ENCODE measurements at regions of chr18 and their contacts with region 1.

Region 1: DNA sequence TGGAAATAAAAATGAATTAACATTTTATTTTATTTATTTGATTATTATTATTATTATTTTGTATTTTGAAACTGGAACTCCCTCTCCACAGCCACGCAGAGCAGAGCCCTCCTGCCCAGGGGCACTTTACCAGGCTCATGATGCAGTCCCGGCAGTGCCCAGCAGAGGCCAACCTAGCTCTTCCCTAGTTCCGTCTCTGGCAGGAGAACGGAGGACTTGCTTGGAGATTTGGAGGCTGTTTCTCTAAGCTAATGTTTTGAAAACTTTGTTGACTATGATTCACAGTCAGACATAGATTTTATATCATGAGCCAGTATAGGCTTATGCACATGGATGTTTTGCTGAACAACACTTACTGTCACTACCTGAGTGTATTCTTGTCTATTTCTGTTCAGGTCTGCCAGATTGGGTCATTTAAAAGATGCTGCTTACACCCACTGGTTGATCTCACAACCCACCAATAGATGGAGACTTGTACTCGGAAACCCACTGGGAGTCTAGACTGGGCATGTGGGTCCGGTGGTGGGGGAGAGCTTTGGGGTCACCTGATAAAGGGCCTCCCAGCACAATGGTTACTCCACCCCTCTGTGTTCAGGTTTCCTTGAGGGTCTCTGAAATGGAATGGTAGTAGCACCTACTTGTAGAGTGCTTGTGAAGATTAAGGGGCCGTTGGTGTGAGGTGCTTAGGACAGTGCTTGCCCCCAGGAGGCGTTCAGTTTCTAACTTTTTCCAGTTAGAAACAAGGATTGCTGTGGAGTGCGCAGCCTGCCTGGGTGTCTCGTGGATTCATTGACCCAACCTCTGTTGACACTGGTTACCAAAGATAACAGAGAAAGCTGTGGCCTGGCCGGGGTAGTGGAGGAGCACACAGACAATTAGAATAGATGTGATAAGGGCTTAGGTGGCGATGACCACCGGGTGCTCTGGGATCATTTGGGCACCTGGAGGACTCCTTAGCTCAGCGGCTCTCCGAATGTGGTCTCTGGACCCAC is 177.3 kb downstream of the HAUS1 start:
- DNase-seq: peak; percentile 46 to 83 (median 72)
- ATAC-seq: peak; percentile 98
- H3K4me3 ChIP-seq: no peak overlapping the region
- H3K27ac ChIP-seq: no peak overlapping the region
- H3K4me1 ChIP-seq: no peaks in the 10 kb centered on the region
- H3K27me3 ChIP-seq: no peaks in the 10 kb centered on the region
- CTCF ChIP-seq: peak; percentile 89 to 95

Region 2: DNA sequence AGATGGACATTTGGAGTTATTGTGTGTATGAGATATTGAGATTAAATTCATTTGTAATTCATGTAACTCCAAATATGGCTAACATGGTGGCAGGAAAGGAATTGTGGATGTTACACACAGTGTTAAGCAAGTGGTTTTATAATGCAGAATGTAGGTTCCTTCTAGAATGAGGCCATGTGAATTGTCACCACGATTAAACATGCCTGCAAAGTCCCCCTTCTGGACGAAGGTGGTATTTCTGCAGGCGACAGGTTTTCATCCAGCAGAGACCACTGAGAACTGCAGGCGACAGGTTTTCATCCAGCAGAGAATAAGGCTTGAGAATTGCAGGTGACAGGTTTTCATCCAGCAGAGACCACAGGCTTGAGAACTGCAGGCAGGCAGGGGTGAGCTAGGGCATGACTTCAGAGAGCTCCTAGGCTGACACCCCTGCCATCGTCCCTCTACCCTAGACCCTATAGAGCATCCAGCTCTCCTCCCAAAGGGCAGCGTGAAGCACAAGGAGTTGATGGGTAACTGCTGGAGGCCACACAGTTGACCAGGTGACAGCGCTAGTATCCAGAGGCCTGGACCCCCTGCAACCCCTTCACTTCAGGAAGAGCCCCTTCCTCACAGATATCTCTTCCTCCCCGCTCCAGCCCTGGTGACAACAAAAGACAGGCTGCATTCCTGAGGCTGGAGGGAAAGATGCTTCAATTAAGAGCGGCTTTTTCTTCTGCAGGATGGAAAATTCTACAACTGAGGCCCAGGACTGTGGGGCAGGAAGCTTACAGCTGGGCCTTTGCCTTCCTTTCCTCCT is 199.8 kb after region 1 on chr18:
- intact Hi-C with region 1: loop called in 1 of 2 experiments (anchors 5 kb)
- DNase-seq: peak in 2 of 4 donors; percentile 37 to 68
- ATAC-seq: peak; percentile 78
- H3K4me3 ChIP-seq: no peak overlapping the region
- H3K27ac ChIP-seq: no peak overlapping the region
- H3K4me1 ChIP-seq: no peaks in the 10 kb centered on the region
- H3K27me3 ChIP-seq: no peaks in the 10 kb centered on the region
- CTCF ChIP-seq: peak; percentile 55 to 61

Region 3: DNA sequence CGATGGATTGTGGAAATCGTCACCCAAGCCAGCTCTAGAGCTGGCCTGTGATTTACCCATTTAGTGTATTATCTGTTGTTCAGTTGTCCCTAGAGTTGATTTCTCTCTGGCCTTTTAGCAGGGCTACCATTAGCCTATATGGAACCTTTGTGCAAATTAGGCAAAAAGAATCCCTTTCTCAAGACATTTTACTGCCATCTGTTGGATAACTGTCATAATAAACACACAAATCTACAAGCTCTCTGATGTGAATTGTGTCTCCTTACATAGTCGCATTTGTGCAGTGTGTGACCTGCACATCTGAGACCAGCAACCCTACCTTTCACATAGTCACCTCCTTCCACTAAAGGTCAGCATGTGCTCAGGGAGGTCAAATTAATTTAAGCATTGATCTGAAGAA is 341.5 kb after region 1 on chr18:
- intact Hi-C with region 1: loop called in 1 of 2 experiments (anchors 10 kb)
- DNase-seq: peak in 1 of 4 donors; percentile 10
- ATAC-seq: peak; percentile 34
- H3K4me3 ChIP-seq: no peak overlapping the region
- H3K27ac ChIP-seq: no peak overlapping the region
- H3K4me1 ChIP-seq: peaks cover 0 to 9% of the 10 kb centered on the region in 2 donors
- H3K27me3 ChIP-seq: peaks cover 0 to 4% of the 10 kb centered on the region in 2 donors
- CTCF ChIP-seq: no peak

Region 4: DNA sequence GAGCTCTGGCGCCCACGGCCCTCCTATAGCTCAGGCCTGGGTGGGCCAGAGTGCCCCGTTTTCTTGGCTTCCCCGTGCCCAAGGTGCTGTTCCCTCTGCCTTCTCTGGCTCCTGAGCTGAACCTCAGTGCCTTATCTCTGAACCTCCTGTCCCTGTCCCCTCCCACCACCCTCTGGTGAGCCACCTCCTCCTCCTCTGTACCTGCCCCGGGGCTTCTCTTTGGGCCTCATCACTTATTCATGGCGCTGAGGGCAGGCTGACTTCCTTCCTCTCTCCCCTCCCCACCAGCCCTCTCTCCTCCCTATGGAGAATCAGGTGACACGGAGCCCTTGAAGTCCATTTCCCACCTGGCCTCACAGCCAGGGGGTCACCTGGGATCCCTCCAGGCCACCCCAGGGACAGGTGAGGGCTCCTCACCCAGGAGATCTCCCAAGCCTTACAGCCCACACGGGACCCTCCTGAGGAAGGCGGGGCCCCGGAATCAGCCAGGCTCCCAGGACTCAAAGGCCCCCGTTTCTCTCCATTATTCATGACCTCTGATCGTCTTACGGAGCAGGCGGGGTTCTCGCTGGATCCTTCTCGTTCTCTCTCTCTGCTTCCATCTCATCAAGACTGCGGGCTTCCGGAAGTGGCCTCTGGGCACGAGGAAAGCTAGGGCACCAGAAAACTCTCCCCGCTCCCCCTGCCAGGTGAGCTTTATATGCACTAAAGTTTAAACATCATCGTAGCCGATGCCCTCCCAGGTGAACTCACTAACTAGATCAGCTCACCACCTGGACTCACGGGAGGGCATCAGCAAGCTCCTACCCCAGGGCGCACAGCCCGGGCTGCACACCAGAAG is 375.9 kb after region 1 on chr18 and contains the start of gene LOXHD1:
- intact Hi-C with region 1: loop called in 1 of 2 experiments (anchors 5 kb)
- DNase-seq: no peak
- ATAC-seq: no peak
- H3K4me3 ChIP-seq: no peak within 1 kb of the TSS
- H3K27ac ChIP-seq: no peak within 1 kb of the TSS
- H3K4me1 ChIP-seq: no peaks in the 10 kb centered on the region
- H3K27me3 ChIP-seq: peaks cover 0 to 3% of the 10 kb centered on the region in 2 donors
- CTCF ChIP-seq: no peak
- polyA plus RNA-seq, gene LOXHD1: 1.00 to 2.0 (median 1.4) TPM

Measured in left lung (tissue), 14 donors.